ENCODE measurements at regions of chr16 and their contacts with region 1.

Region 1: GRCh38 chr16:76668207-76668725 is 391.1 kb downstream of the CNTNAP4 start:
- DNase-seq: peak; percentile 65 to 67
- H3K4me3 ChIP-seq: no peak overlapping the region
- H3K4me3 Mint-ChIP-seq: no peak overlapping the region
- H3K27ac Mint-ChIP-seq: no peak overlapping the region
- H3K4me1 ChIP-seq: no peaks in the 10 kb centered on the region
- H3K4me1 Mint-ChIP-seq: no peaks in the 10 kb centered on the region
- H3K27me3 ChIP-seq: no peaks in the 10 kb centered on the region; the same call in none of the 2 replicates
- H3K27me3 Mint-ChIP-seq: peaks cover 7% of the 10 kb centered on the region
- CTCF ChIP-seq: peak; percentile 54 to 85

Region 2: DNA sequence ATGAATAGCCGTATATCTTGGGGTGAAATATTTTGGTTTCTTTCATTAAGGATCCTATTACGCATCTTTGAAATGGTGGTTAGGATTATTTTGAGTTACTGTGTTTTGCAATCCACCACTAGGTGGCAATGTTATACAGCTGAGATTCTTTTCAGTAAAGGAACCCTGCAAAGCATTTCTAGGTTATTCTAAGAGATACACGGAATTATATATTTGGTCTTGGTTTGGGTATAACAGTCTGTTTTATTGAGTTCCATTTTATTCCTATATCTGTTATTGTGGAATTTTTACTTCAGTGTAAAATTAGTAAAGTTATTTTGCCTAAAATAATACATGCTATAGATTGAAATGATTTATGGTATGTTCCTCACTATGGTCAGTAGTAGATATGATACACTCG is 879.0 kb before region 1 on chr16:
- CTCF ChIA-PET with region 1: no interaction called
- POLR2A ChIA-PET with region 1: no interaction called
- intact Hi-C with region 1: loop called (anchors 5 kb)
- DNase-seq: peak in 1 of 2 experiments; percentile 65
- H3K4me3 ChIP-seq: no peak overlapping the region
- H3K4me3 Mint-ChIP-seq: no peak overlapping the region
- H3K27ac Mint-ChIP-seq: peak overlapping the region; percentile 17
- H3K4me1 ChIP-seq: no peaks in the 10 kb centered on the region
- H3K4me1 Mint-ChIP-seq: peaks cover 5% of the 10 kb centered on the region
- H3K27me3 ChIP-seq: no peaks in the 10 kb centered on the region
- H3K27me3 Mint-ChIP-seq: peaks cover 2% of the 10 kb centered on the region
- CTCF ChIP-seq: peak; percentile 81 to 90

Region 3: DNA sequence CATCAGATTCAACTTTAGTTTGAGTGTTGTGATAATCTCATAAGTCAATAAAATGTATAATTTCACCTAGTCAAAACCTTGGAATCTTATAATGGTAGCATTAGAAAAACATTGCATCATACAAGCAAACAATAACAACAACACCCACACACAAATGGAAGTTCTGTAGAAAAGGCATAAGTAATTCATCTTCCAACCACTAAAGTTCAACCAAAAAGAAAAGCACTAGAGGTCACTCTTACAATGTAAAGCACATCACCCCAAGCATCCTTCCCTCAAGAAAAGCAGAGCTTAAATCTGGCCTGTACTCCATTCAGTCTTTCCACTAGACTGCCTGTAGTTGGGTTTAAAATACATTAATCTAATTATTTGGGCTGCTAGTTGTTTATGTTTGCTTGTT is 389.3 kb before region 1 on chr16:
- CTCF ChIA-PET with region 1: no interaction called
- POLR2A ChIA-PET with region 1: no interaction called
- intact Hi-C with region 1: loop called (anchors 1 kb)
- DNase-seq: peak in 1 of 2 experiments; percentile 26
- H3K4me3 ChIP-seq: no peak overlapping the region
- H3K4me3 Mint-ChIP-seq: no peak overlapping the region
- H3K27ac Mint-ChIP-seq: no peak overlapping the region
- H3K4me1 ChIP-seq: no peaks in the 10 kb centered on the region
- H3K4me1 Mint-ChIP-seq: no peaks in the 10 kb centered on the region
- H3K27me3 ChIP-seq: no peaks in the 10 kb centered on the region
- H3K27me3 Mint-ChIP-seq: no peaks in the 10 kb centered on the region
- CTCF ChIP-seq: peak; percentile 32 to 44

Region 4: DNA sequence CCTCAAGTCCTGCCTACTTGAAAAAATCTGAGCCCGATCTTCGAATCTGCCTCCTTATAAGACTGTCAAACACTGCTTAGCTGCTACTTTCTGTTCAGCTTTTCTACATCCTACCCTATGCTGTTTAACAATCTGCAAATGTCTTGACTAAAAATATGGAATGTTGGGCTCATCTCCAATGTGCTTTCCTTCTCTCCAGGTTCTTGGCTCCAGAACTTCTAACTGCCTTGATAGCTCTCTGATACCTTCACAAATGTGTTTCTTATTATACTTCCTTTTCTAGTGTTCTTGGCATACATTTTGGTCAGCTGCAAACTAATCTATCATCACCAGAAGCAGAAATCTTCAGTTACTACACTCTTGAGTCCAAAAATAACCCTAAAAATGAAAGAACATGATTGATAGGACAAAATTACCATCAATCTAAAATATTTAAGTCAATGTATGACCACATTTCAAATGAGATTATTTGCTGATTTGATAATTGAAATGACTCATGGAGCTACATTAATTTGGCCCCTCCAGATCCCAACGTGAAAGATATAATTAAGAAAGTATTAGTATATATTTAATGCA is 150.4 kb after region 1 on chr16:
- CTCF ChIA-PET with region 1: no interaction called
- POLR2A ChIA-PET with region 1: no interaction called
- intact Hi-C with region 1: loop called (anchors 1 kb)
- DNase-seq: no peak
- H3K4me3 ChIP-seq: no peak overlapping the region
- H3K4me3 Mint-ChIP-seq: no peak overlapping the region
- H3K27ac Mint-ChIP-seq: no peak overlapping the region
- H3K4me1 ChIP-seq: no peaks in the 10 kb centered on the region
- H3K4me1 Mint-ChIP-seq: no peaks in the 10 kb centered on the region
- H3K27me3 ChIP-seq: no peaks in the 10 kb centered on the region; the same call in 1 of the 2 replicates
- H3K27me3 Mint-ChIP-seq: peaks cover 27% of the 10 kb centered on the region
- CTCF ChIP-seq: no peak

Region 5: GRCh38 chr16:76882077-76882476 is 213.8 kb after region 1 on chr16:
- CTCF ChIA-PET with region 1: no interaction called
- POLR2A ChIA-PET with region 1: no interaction called
- intact Hi-C with region 1: loop called (anchors 2 kb)
- DNase-seq: no peak
- H3K4me3 ChIP-seq: no peak overlapping the region
- H3K4me3 Mint-ChIP-seq: no peak overlapping the region
- H3K27ac Mint-ChIP-seq: no peak overlapping the region
- H3K4me1 ChIP-seq: no peaks in the 10 kb centered on the region
- H3K4me1 Mint-ChIP-seq: no peaks in the 10 kb centered on the region
- H3K27me3 ChIP-seq: no peaks in the 10 kb centered on the region
- H3K27me3 Mint-ChIP-seq: peaks cover 6% of the 10 kb centered on the region
- CTCF ChIP-seq: no peak

Region 6: GRCh38 chr16:77043076-77043475 is 374.8 kb after region 1 on chr16:
- CTCF ChIA-PET with region 1: no interaction called
- POLR2A ChIA-PET with region 1: no interaction called
- intact Hi-C with region 1: loop called (anchors 1 kb)
- DNase-seq: peak in 1 of 2 experiments; percentile 11
- H3K4me3 ChIP-seq: no peak overlapping the region
- H3K4me3 Mint-ChIP-seq: no peak overlapping the region
- H3K27ac Mint-ChIP-seq: no peak overlapping the region
- H3K4me1 ChIP-seq: no peaks in the 10 kb centered on the region
- H3K4me1 Mint-ChIP-seq: no peaks in the 10 kb centered on the region
- H3K27me3 ChIP-seq: no peaks in the 10 kb centered on the region
- H3K27me3 Mint-ChIP-seq: peaks cover 14% of the 10 kb centered on the region
- CTCF ChIP-seq: peak in 1 of 2 experiments; percentile 33

Region 7: DNA sequence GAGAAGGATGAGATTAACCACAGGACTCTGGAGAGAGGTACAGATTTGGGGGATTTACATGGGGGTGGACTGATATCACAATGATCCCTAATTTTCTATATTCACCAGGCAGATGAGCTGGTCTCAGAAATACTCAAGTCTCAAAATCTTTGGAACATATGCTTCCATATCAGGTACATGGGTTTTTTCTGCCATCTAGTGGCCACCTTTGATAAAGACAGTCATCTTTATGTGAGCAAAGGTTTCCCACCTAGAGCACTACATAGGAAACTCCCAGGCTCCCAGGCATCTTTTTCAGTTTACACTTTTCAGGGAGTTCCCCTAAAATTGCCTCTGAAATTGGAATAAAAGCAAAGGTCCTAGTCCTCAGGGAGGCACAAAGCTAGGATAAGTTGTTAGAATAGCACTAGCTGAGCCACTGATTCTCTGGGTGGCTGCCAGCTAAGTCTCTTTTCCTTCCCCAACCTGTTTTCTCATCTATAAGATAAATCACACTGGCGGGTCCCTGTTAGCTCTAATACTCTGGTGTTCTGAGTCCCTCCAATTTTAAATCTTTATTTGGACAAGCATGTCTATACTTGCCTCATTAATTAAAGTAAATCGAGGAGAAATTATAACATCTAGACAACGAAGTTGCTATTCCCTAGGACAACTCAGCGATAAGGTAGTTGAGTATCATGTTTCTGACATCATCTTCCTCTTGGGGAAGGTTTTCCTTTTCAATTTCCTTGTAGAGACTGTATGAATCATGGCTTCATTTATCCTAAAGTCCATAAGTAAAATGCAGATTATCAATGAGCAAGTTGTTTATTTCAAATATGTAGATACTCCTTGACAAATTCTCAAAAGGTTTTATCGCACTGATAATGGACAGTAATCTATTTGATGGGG is 503.7 kb after region 1 on chr16:
- CTCF ChIA-PET with region 1: interaction called, 5 read pairs
- POLR2A ChIA-PET with region 1: no interaction called
- intact Hi-C with region 1: loop called (anchors 1 kb)
- DNase-seq: peak in 1 of 2 experiments; percentile 73
- H3K4me3 ChIP-seq: no peak overlapping the region
- H3K4me3 Mint-ChIP-seq: no peak overlapping the region
- H3K27ac Mint-ChIP-seq: no peak overlapping the region
- H3K4me1 ChIP-seq: no peaks in the 10 kb centered on the region
- H3K4me1 Mint-ChIP-seq: no peaks in the 10 kb centered on the region
- H3K27me3 ChIP-seq: no peaks in the 10 kb centered on the region
- H3K27me3 Mint-ChIP-seq: peaks cover 22% of the 10 kb centered on the region
- CTCF ChIP-seq: peak; percentile 72 to 79